GM12878 (cell line): ENCODE measurements at regions of chr20 and their contacts with region 1.

Region 1: GRCh38 chr20:57498425-57499400 is 26.2 kb downstream of the CTCFL start:
- DNase-seq: no peak
- ATAC-seq: peak; percentile 93
- H3K4me3 ChIP-seq: no peak overlapping the region
- H3K27ac ChIP-seq: no peak overlapping the region
- H3K4me1 ChIP-seq: peaks cover 21% of the 10 kb centered on the region
- H3K27me3 ChIP-seq: peaks cover 0 to 2% of the 10 kb centered on the region in 2 experiments; a peak in 1 of 4 replicates
- CTCF ChIP-seq: peak; percentile 54 to 74 (median 70)
- EP300 ChIP-seq: no peak
- POLR2A ChIP-seq: no peak
- RAD21 ChIP-seq: peak; percentile 60

Region 2: DNA sequence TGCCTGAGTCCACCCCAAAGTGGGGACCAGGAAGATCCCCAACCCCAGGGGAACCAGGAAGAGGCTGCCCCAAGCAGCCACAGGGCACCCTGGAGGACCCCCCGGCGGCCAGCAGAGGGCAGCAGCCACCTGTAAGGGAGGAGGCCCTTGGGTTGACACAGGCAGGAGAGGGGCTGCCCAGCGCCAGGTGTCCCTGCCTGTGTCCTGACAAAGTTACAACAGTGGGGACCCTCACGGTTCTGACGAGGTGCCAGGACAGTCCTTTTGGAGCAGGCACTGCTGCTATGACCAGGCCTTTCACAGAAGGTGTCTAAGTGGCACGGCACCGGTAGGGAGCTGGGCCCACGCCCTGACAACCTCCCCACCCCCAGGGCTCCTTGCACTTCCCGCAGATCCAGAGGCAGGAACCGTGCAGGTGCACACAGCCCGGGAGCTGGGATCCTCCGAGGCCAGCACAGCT is 409.0 kb before region 1 on chr20:
- CTCF ChIA-PET with region 1: interaction called, 3 read pairs
- POLR2A ChIA-PET with region 1: no interaction called
- RAD21 ChIA-PET with region 1: no interaction called
- SMC1A ChIA-PET with region 1: no interaction called
- in situ Hi-C with region 1: loop called (anchors 10 kb)
- intact Hi-C with region 1: loop called (anchors 5 kb)
- DNase-seq: no peak
- ATAC-seq: peak; percentile 97
- H3K4me3 ChIP-seq: no peak overlapping the region
- H3K27ac ChIP-seq: no peak overlapping the region
- H3K4me1 ChIP-seq: no peaks in the 10 kb centered on the region
- H3K27me3 ChIP-seq: no peaks in the 10 kb centered on the region
- CTCF ChIP-seq: peak; percentile 77 to 95 (median 82)
- EP300 ChIP-seq: no peak
- POLR2A ChIP-seq: no peak
- RAD21 ChIP-seq: peak; percentile 78

Region 3: GRCh38 chr20:57374931-57375651 is 123.6 kb before region 1 on chr20:
- CTCF ChIA-PET with region 1: interaction called, 47 read pairs
- POLR2A ChIA-PET with region 1: no interaction called
- RAD21 ChIA-PET with region 1: interaction called, 4 read pairs
- SMC1A ChIA-PET with region 1: interaction called, 48 read pairs
- in situ Hi-C with region 1: no loop called
- intact Hi-C with region 1: no loop called
- DNase-seq: no peak
- ATAC-seq: no peak
- H3K4me3 ChIP-seq: no peak overlapping the region
- H3K27ac ChIP-seq: no peak overlapping the region
- H3K4me1 ChIP-seq: 0 out of 2 replicates have a peak, but pooled peaks cover 5% of the 10 kb centered on the region
- H3K27me3 ChIP-seq: no peaks in the 10 kb centered on the region
- CTCF ChIP-seq: no peak
- EP300 ChIP-seq: no peak
- POLR2A ChIP-seq: no peak; the same call in none of the 2 replicates
- RAD21 ChIP-seq: no peak